Mammary epithelial cell (primary cell): ENCODE measurements at regions of chr1 and their contacts with region 1.

Region 1: GRCh38 chr1:93680757-93681550 is 683 bp downstream of the BCAR3 start:
- DNase-seq: peak; percentile 84
- H3K4me3 ChIP-seq: peak overlapping the region; percentile 59 to 94 (median 84)
- H3K27ac ChIP-seq: peak overlapping the region; percentile 85
- H3K4me1 ChIP-seq: peaks cover 42% of the 10 kb centered on the region
- H3K27me3 ChIP-seq: no peaks in the 10 kb centered on the region
- CTCF ChIP-seq: peak; percentile 60 to 72

Region 2: DNA sequence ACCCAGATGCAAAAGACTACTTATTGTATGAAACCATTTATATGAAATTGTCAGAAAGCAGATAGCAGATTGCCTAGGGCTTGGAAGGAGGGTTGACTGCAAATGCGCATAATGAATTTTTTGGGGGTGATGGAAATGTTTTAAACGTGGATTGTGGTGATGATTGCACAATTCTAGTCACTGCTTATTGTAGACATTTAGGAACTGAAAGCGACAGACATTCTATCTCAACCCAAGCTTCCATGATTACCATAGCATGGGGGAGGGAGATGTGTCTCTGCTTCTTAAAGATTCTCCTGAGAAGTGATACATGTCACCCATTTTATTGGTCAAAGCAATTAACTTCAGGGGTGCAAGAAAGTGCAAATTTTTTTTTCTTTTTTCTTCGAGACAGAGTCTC is 604.7 kb before region 1 on chr1:
- CTCF ChIA-PET with region 1: no interaction called
- dilution Hi-C with region 1: no loop called
- in situ Hi-C with region 1: no loop called
- intact Hi-C with region 1: no loop called
- DNase-seq: no peak
- H3K4me3 ChIP-seq: no peak overlapping the region
- H3K27ac ChIP-seq: no peak overlapping the region
- H3K4me1 ChIP-seq: peaks cover 10% of the 10 kb centered on the region
- H3K27me3 ChIP-seq: no peaks in the 10 kb centered on the region
- CTCF ChIP-seq: no peak

Region 3: DNA sequence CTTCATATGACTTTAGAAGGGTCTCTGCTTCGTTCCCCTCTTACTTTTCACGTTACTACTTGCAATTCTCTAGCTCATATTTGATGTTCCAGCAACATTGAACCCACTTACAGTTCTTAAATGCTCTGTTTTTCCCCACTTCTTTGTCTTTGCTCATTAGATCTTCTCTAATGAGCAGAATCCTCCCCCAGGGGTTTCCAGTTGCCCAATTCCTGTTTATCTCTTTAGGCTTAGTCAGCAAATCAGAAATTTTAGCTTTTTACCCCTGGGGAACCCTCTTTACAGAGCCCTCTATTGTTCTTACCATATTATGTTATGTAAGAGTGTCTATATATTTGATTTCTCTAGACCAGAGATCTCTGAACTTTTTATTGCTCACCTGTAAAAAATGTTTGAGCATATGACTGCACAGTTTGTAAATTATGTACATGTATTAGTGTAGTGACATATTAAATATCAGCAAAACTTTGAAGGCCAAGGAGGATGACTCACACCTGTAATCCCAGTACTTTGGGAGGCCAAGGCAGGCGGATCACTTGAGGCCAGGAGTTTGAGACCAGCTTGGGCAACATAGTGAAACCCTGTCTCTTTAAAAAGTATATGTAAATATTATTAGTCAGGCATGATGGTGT is 161.6 kb before region 1 on chr1:
- CTCF ChIA-PET with region 1: no interaction called
- dilution Hi-C with region 1: no loop called
- in situ Hi-C with region 1: no loop called
- intact Hi-C with region 1: no loop called
- DNase-seq: peak; percentile 84
- H3K4me3 ChIP-seq: no peak overlapping the region
- H3K27ac ChIP-seq: peak overlapping the region; percentile 47
- H3K4me1 ChIP-seq: peaks cover 16% of the 10 kb centered on the region
- H3K27me3 ChIP-seq: no peaks in the 10 kb centered on the region
- CTCF ChIP-seq: no peak

Region 4: DNA sequence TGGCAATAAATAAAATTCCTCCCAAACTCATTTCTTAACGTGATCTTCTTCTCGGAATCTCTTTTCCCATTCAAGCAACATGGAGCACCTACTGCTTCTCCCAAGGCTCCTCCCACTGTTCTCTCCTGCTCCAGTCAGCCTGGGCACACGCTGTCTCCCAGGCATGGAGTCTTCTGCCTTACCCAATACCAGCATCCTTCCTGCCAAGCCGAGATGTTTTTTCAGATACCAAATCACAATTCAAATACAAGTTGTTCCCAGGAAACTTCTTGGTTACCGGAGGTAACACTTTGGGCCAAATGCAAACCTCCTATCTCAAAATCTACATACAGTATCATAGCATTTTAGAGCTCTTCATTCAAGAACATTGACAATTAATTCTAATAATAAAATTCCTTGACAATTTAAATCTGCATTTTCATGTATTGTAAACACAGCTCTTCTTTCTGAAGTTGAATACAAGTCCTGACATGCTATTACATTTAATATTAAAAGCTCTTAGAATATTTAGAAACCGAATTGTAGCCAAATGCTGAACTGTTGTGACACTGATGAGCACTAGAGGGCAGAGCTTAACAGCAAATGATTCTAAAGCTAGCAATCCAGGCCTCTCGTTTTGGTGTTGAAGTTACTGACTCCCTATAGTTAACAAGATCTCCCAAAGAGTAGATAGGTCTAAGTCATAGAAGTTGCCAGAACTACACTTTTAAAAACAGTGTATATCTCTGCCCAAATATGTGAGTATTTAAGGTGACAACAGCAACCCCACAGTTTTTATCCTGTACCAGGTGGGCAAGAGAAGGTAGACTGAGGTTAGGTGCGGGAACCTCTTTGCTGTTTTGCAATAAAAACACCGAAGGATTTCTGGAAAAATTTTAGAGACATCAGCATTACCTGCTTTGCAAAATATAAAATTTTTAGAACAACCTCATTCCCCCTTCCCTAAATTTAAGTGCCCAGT is 51.6 kb before region 1 on chr1:
- CTCF ChIA-PET with region 1: no interaction called
- dilution Hi-C with region 1: no loop called
- in situ Hi-C with region 1: no loop called
- intact Hi-C with region 1: loop called (anchors 1 kb)
- DNase-seq: peak; percentile 59
- H3K4me3 ChIP-seq: no peak overlapping the region
- H3K27ac ChIP-seq: peak overlapping the region; percentile 35
- H3K4me1 ChIP-seq: peaks cover 65% of the 10 kb centered on the region
- H3K27me3 ChIP-seq: no peaks in the 10 kb centered on the region
- CTCF ChIP-seq: peak; percentile 74 to 78

Region 5: DNA sequence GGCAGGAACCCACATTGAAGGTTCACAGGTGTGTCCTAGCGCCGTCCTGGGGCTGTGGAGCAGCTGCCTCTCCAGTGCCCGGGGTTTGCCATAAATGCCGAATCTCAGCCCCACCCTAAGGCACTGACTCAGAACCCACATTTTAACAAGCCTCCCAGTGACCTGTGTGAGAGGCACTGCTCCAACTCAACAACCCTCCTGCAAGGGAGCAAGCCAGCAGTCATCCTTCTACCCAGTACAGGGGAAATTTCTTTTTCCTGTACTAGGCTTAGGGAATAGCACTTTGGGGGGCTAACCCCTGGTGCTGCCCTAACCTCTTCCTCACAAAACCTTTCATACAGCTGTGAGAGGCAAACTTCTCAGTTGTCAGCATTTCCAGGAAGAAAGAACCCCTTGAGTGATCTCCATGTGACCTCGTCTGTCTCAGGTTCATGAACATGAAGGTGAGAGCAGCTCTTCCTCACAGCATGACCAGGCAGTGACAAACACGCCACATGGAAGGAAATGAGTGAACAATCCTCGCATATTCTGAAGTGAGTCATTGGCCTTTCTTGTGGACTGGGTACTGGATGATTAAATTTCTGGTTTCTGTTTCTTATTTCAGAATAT is 12.1 kb after region 1 on chr1:
- CTCF ChIA-PET with region 1: no interaction called
- dilution Hi-C with region 1: no loop called
- in situ Hi-C with region 1: no loop called
- intact Hi-C with region 1: loop called (anchors 1 kb)
- DNase-seq: peak; percentile 97
- H3K4me3 ChIP-seq: peak overlapping the region in 1 of 3 experiments; percentile 4
- H3K27ac ChIP-seq: peak overlapping the region; percentile 100
- H3K4me1 ChIP-seq: peaks cover 53% of the 10 kb centered on the region
- H3K27me3 ChIP-seq: no peaks in the 10 kb centered on the region
- CTCF ChIP-seq: no peak

Region 6: DNA sequence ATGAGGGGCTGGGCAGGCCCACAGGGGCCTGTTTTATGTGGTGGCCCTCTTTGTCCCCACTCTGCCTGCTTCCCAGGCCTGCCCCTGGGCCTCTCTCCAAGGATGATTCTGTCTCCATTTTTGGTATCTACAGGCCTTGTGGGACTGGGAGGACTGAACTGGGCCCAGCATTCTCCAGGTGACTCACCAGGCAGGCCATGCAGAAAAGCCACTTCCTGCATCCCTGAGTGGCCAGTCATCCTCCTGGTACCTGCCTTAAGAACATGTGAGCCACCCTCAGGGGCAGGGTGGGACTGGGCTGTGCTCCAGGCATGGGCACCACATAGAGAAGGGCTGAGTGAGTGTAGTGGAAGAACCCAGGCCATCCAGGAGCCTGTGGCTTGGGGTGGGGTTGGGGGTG is 20.7 kb after region 1 on chr1:
- CTCF ChIA-PET with region 1: no interaction called
- dilution Hi-C with region 1: no loop called
- in situ Hi-C with region 1: no loop called
- intact Hi-C with region 1: loop called (anchors 1 kb)
- DNase-seq: peak; percentile 100
- H3K4me3 ChIP-seq: no peak overlapping the region
- H3K27ac ChIP-seq: peak overlapping the region; percentile 97
- H3K4me1 ChIP-seq: peaks cover 70% of the 10 kb centered on the region
- H3K27me3 ChIP-seq: no peaks in the 10 kb centered on the region
- CTCF ChIP-seq: no peak

Region 7: DNA sequence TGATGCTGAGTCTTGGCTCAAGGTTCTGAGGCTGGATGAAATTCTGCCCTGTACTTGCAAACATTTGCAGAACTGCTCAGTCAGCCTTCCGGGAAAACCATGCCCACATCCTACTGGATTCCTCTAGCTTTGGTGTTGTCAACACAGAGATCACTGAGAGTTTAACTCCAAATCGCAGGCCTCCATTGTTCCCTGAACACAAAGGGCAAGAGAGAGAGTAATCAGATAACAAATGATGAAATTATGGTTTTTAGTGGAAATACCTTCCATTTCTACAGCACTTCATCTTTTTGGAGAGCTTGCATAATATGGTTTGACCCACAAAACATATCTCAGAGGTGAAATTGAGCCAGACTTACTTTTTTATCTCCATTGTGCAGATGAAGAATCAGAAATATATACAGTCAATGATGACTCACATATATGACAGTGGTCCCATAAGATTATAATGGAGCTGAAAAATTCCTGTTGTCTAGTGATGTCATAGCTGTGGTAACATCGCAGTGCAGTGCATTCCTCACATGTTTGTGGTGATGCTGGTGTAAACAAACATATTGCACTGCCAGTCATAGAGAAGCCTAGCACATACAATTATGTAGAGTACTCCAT is 73.3 kb after region 1 on chr1:
- CTCF ChIA-PET with region 1: no interaction called
- dilution Hi-C with region 1: no loop called
- in situ Hi-C with region 1: no loop called
- intact Hi-C with region 1: loop called (anchors 1 kb)
- DNase-seq: peak; percentile 77
- H3K4me3 ChIP-seq: no peak overlapping the region
- H3K27ac ChIP-seq: peak overlapping the region; percentile 86
- H3K4me1 ChIP-seq: peaks cover 65% of the 10 kb centered on the region
- H3K27me3 ChIP-seq: no peaks in the 10 kb centered on the region
- CTCF ChIP-seq: no peak

Region 8: DNA sequence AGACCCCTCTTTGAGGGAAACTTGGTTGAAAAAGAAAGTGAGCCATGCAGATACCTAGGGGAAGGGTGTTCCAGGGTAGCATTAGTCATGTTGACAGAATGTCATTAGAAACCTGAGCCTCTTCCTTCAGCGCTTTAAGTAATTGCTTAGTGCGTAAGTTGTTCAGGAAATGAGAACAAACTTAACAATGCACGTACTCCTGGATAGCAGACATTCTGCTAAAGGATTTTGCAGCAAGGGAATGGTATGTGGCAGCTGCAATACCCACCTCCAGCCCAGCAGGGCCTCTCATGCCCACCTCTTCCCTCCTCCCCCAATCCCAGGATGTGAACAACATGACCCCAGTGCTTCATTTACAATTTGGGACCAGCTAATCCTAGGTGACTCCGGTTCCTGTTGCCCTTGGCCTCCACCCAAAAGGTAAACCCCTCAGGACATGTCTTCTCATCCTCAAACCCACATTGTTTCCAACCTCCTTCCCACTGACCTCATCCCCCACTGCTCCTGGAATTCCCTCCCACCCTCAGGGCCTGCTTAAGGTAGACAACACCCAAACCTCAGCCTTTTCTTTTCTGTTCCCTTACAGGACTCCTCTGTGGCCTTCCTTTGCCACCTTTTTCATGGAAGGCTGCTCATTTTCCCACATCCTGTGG is 98.7 kb after region 1 on chr1:
- CTCF ChIA-PET with region 1: interaction called, 6 read pairs
- dilution Hi-C with region 1: no loop called
- in situ Hi-C with region 1: no loop called
- intact Hi-C with region 1: loop called (anchors 1 kb)
- DNase-seq: peak; percentile 100
- H3K4me3 ChIP-seq: no peak overlapping the region
- H3K27ac ChIP-seq: peak overlapping the region; percentile 99
- H3K4me1 ChIP-seq: peaks cover 58% of the 10 kb centered on the region
- H3K27me3 ChIP-seq: no peaks in the 10 kb centered on the region
- CTCF ChIP-seq: peak in 1 of 2 donors; percentile 22

Region 9: DNA sequence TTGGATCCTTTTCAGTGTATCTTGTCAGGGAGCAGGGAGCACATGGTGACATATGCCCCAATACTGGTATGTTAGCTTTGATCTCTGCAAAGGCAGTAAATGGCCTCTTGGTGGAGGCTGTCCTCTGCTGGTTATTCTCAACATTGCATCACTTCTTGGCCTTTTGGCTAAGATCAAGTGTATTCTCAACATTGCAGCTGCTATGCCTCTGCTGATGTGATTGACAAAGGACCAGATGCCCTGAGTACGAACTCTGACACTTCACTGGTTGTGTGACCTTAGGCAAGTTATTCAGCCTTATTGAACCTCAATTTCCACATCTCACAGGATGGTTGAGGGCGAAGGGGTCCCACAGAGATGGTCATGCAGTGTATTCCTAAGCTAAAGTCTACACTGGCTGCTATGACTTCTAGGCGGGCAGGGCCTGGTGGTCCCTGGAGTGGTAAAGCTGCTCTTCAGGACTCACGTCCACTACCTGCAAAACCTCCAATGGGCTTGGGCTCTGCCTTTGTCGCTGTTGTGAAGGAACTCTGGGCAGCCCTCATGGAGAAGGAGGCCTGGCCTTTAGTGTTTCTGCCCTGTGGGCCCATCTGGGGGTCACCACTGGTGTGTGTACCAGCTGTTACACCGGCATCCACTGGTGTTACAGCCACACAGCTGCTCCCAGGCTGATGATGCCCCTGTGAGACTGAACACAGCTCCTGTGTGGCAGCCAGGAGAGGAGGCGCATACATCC is 133.3 kb after region 1 on chr1:
- CTCF ChIA-PET with region 1: interaction called, 9 read pairs
- dilution Hi-C with region 1: no loop called
- in situ Hi-C with region 1: loop called in 1 of 2 experiments (anchors 5 kb)
- intact Hi-C with region 1: loop called (anchors 1 kb)
- DNase-seq: peak; percentile 78
- H3K4me3 ChIP-seq: no peak overlapping the region
- H3K27ac ChIP-seq: peak overlapping the region; percentile 76
- H3K4me1 ChIP-seq: peaks cover 75% of the 10 kb centered on the region
- H3K27me3 ChIP-seq: no peaks in the 10 kb centered on the region
- CTCF ChIP-seq: peak; percentile 100